OCI-LY7 (cell line): ENCODE measurements at regions of chr7 and their contacts with region 1.

Region 1: DNA sequence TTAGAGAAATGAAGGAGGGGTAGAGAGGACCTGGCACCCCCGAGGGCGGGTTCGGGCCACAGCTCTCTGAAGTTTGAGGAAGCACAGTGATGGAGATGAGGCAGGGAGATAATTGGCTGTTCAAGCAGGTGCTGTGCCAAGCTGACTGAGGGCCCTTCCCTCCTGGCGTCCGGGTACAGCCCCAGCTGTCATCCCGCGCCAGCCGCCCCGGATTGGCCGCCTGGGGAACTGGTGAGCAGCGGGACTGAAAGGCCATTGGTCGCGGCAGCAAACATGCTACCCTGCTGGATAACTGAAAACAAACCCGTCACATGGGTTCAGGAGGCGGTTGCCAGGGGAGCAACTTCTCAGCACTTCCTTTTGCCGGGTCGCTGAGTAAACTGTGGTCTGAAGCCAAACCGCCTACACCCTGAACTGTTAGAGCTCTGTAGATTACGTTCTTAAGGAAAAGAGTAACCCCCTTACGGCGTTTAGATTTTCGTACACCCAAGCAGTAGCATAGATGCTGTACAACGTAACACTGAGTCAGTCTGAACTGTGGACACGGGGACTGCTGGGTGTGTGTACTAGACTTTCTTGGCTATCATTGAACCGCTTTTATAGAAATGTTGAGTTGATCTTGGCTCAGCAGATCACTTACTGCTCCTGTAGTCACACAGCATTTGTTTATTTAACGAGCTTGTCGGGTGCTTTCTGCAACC is 1.3 kb downstream of the INSIG1 start:
- DNase-seq: peak; percentile 95
- H3K4me3 ChIP-seq: peak overlapping the region; percentile 93
- H3K27ac ChIP-seq: peak overlapping the region; percentile 83
- H3K4me1 ChIP-seq: peaks cover 36% of the 10 kb centered on the region
- CTCF ChIP-seq: no peak

Region 2: GRCh38 chr7:155003376-155004214 is 295.4 kb before region 1 on chr7:
- CTCF ChIA-PET with region 1: no interaction called
- POLR2A ChIA-PET with region 1: interaction called, 3 read pairs
- intact Hi-C with region 1: loop called (anchors 1 kb)
- DNase-seq: peak; percentile 89
- H3K4me3 ChIP-seq: peak overlapping the region; percentile 93
- H3K27ac ChIP-seq: peak overlapping the region; percentile 65
- H3K4me1 ChIP-seq: peaks cover 22% of the 10 kb centered on the region
- CTCF ChIP-seq: no peak

Region 3: GRCh38 chr7:155205368-155206317 is 93.3 kb before region 1 on chr7:
- CTCF ChIA-PET with region 1: no interaction called
- POLR2A ChIA-PET with region 1: interaction called, 18 read pairs
- intact Hi-C with region 1: loop called (anchors 1 kb)
- DNase-seq: peak; percentile 93
- H3K4me3 ChIP-seq: peak overlapping the region; percentile 69
- H3K27ac ChIP-seq: peak overlapping the region; percentile 92
- H3K4me1 ChIP-seq: peaks cover 51% of the 10 kb centered on the region
- CTCF ChIP-seq: no peak

Region 4: GRCh38 chr7:155644178-155644970 is 345.4 kb after region 1 on chr7 and contains the start of gene RBM33:
- CTCF ChIA-PET with region 1: no interaction called
- POLR2A ChIA-PET with region 1: no interaction called
- intact Hi-C with region 1: loop called (anchors 5 kb)
- DNase-seq: peak; percentile 85
- H3K4me3 ChIP-seq: peak within 1 kb of the TSS; percentile 94
- H3K27ac ChIP-seq: peak within 1 kb of the TSS; percentile 86
- H3K4me1 ChIP-seq: peaks cover 31% of the 10 kb centered on the region
- CTCF ChIP-seq: no peak
- total RNA-seq, gene RBM33: 67.6 and 79.2 TPM in 2 replicates